Activated T-helper 1 cell treated with anti-CD3 and anti-CD28 coated beads, Interleukin-12 subunit alpha, Interleukin-12 subunit beta, Interleukin-2, Interleukin-4 antibody, amounts not matched to agents 30 ng/mL and 10 ng/mL and 1 ng/mL, durations not matched to agents 14 hours and 24 hours and 36 hours (primary cell): ENCODE measurements at regions of chr17 and their contacts with region 1.

Region 1: GRCh38 chr17:80147035-80147836 is at the start of gene EIF4A3:
- DNase-seq: peak; percentile 97
- H3K4me3 Mint-ChIP-seq: peak within 1 kb of the TSS; percentile 88
- H3K27ac Mint-ChIP-seq: peak within 1 kb of the TSS; percentile 92
- H3K4me1 Mint-ChIP-seq: peaks cover 39% of the 10 kb centered on the region
- H3K27me3 Mint-ChIP-seq: no peaks in the 10 kb centered on the region
- total RNA-seq, gene EIF4A3: 179 and 182 TPM in 2 replicates

Region 2: GRCh38 chr17:79997011-79997660 is 150.1 kb before region 1 on chr17:
- intact Hi-C with region 1: loop called (anchors 5 kb)
- DNase-seq: peak; percentile 73
- H3K4me3 Mint-ChIP-seq: peak overlapping the region; percentile 60
- H3K27ac Mint-ChIP-seq: peak overlapping the region; percentile 96
- H3K4me1 Mint-ChIP-seq: peaks cover 47% of the 10 kb centered on the region
- H3K27me3 Mint-ChIP-seq: no peaks in the 10 kb centered on the region

Region 3: DNA sequence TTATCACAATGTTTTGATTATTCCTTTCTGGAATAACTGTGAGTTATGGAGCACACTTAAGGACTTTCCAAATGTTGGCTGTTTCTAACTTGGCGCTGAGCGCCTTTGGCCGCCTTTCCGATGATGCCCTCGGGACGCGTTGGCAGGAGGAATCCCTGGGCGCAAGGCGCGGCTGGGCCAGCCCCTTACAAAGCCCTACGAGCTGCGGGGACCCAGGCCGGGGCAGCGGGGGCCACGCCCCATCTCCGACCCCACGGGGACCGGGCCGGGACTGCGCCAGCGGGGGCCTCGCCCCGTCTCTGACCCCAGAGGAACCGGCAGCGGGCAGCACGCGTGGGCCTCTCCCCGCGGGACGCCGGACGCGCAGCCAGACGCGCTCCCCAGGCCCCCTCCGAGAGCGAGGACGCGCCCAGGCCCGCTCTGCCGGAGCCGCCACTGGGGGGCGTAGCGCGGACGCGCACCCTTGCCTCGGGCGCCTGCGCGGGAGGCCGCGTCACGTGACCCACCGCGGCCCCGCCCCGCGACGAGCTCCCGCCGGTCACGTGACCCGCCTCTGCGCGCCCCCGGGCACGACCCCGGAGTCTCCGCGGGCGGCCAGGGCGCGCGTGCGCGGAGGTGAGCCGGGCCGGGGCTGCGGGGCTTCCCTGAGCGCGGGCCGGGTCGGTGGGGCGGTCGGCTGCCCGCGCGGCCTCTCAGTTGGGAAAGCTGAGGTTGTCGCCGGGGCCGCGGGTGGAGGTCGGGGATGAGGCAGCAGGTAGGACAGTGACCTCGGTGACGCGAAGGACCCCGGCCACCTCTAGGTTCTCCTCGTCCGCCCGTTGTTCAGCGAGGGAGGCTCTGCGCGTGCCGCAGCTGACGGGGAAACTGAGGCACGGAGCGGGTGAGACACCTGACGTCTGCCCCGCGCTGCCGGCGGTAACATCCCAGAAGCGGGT is 46.0 kb before region 1 on chr17 and contains the start of gene GAA:
- intact Hi-C with region 1: loop called (anchors 1 kb)
- DNase-seq: peak; percentile 86
- H3K4me3 Mint-ChIP-seq: peak within 1 kb of the TSS; percentile 92
- H3K27ac Mint-ChIP-seq: peak within 1 kb of the TSS; percentile 82
- H3K4me1 Mint-ChIP-seq: peaks cover 26% of the 10 kb centered on the region
- H3K27me3 Mint-ChIP-seq: peaks cover 6% of the 10 kb centered on the region
- total RNA-seq, gene GAA: 12.3 and 13.1 TPM in 2 replicates

Region 4: DNA sequence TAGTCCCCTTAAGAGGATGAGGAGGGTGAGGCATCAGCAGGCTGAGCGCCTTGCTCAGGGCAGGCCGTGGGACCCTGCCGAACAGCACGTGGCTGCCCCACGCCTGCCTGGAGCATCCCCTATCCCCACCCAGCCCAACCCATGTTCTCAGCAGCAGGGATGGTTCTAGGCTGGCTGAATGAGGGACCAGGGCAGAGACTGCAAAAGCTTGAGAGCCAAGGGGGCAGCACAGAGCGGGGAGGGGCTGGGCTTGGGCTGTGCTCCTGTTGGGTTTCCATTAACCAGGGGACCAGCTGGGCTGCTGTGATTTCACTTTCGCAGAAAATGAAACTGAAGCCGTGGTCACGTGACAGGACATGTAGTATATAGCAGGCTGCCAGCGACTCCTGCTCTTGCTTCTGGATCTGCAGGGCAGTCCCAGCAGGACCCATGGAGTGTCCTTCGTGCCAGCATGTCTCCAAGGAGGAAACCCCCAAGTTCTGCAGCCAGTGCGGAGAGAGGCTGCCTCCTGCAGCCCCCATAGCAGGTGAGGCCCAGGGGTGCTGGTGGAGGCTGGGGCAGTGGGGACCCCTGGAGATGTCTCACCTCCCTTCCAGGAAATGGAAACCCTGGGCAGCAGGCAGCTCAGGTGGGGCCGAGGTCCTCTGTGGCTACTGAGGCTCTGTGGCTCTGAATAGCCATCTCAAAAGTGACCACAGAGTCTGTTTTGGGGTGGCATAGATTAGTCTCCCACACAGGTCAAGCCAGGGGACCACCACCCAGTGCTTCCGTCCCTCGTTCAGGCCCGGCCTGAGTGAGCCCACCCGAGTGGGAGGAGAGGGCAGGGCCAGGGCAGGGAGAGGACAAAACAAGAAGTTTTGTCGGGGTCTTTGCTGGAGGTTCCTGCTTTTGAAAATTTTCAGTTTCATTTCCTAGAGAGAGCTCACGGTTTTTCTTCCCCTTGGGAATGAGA is 116.3 kb after region 1 on chr17:
- intact Hi-C with region 1: loop called (anchors 1 kb)
- DNase-seq: peak; percentile 89
- H3K4me3 Mint-ChIP-seq: peak overlapping the region; percentile 100
- H3K27ac Mint-ChIP-seq: peak overlapping the region; percentile 87
- H3K4me1 Mint-ChIP-seq: peaks cover 49% of the 10 kb centered on the region
- H3K27me3 Mint-ChIP-seq: no peaks in the 10 kb centered on the region